Heart right ventricle (tissue), 16 donors: ENCODE measurements at regions of chr3 and their contacts with region 1.

Region 1: DNA sequence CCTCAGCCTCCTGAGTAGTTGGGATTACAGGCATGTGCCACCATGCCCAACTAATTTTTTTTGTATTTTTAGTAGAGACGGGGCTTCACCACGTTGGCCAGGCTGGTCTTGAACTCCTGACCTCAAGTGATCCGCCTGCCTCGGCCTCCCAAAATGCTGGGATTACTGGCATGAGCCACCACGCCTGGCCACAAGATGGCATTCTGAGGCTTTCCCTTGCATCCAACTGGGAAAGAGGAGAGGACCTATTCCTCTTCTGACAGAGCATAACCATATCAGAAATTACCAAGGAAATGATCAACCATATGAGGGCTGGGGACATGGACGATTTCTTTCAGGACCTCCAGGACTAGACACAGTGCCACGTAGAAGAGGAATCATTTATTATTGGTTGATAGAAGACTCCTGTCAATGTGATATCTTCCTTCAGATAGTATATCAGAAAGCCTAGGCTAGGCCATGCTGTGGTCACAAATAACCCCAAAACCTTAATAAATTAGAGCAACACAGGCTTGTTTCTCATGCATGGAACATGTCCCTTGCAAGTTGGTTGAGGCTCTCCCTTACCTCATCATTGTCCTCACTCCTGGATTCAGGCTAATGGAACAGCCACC is 372.3 kb upstream of the IL12A start:
- DNase-seq: peak; percentile 36 to 43
- ATAC-seq: peak in 7 of 8 donors; percentile 52 to 81 (median 73)
- H3K4me3 ChIP-seq: no peak overlapping the region
- H3K27ac ChIP-seq: no peak overlapping the region
- H3K4me1 ChIP-seq: peaks cover 0 to 14% (median 9%) of the 10 kb centered on the region in 9 donors
- H3K27me3 ChIP-seq: no peaks in the 10 kb centered on the region
- CTCF ChIP-seq: peak; percentile 57 to 78 (median 70)

Region 2: DNA sequence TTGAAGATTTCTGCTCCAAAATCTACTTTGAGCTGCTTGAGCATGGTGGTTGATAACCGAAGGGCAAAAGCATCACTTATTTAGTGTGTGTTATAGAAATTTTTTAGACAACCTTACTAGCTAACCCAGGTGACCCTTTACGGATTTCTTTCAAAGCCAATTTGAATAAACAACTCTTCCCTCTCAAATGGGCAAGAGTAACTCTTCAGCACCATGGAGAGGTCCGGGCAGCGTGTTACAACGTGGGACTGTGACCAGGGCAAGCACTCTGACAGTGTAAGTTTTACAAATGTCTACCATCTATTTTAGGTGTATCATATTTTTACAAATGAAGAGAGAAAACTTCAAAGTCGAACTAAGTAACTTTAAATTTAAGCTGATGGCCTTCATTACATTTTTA is 342.7 kb before region 1 on chr3:
- intact Hi-C with region 1: no loop called
- DNase-seq: peak; percentile 18 to 60
- ATAC-seq: peak in 2 of 8 donors; percentile 27 to 72
- H3K4me3 ChIP-seq: no peak overlapping the region
- H3K27ac ChIP-seq: no peak overlapping the region
- H3K4me1 ChIP-seq: no peaks in the 10 kb centered on the region
- H3K27me3 ChIP-seq: no peaks in the 10 kb centered on the region
- CTCF ChIP-seq: no peak

Region 3: DNA sequence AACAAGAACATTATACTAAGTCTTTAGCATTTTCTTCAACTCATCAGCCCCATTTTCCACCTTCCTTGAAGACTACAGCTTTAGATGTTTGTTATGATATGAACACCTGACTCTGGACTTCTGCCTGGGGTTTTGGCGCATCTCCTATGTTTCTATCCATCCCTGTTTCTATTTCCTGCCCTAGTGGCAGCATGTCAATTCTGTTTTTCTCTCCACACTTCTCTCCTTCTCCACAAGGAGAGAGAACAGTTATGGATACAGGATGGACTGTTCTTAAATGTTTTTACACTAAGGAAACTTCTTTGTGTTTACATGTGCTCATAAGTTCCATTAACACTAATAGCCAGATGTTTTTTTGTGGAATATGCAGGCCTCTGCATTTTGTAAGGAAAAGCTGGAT is 51.0 kb before region 1 on chr3:
- intact Hi-C with region 1: no loop called
- DNase-seq: no peak
- ATAC-seq: no peak
- H3K4me3 ChIP-seq: no peak overlapping the region
- H3K27ac ChIP-seq: no peak overlapping the region
- H3K4me1 ChIP-seq: no peaks in the 10 kb centered on the region
- H3K27me3 ChIP-seq: no peaks in the 10 kb centered on the region
- CTCF ChIP-seq: no peak

Region 4: DNA sequence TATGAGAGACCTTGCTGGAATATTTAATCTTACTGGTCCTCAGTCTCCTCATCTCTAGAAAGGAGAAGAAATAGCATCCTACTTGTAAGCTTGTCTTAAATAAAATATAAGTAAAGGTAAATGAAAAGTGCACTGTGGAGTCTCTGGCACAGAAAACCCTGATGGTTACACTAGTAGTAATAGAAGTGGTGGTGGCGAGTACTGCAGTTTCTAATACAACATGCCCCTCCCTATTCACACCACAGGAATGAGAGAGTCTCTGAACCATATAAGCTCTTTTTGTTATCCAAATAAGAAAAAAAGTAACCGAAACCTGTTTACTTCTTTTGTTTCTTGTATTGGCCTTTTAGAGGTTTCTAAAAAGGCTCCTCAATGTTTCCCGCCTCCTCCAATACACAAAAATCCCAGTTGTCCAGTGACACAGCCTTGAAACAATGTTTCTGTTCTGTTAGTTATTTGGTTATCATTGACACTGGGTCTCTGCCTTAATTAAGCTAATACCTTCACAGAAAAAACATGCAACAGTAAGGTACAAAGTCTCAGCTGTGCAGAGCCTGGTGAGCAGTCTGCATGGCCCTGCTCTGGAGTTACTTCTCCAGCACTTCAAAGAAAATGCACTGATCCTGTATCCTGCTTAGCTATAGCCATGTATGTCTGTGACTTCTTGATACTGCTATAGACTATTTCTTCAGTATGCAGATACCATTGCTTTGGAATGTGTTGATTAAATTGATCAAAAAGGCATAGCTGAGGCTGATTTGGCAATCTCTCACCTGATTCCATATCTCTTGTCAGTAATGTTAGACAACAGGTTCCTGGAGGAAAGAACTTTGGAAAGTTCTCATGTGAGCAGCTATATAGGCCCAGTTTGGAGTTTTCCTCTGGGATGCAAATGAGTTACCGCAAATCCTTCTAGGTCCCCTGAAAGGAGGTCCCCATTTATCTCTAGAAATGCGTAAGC is 56.7 kb after region 1 on chr3:
- intact Hi-C with region 1: loop called in 1 of 10 experiments (anchors 5 kb)
- DNase-seq: no peak
- ATAC-seq: no peak
- H3K4me3 ChIP-seq: no peak overlapping the region
- H3K27ac ChIP-seq: no peak overlapping the region
- H3K4me1 ChIP-seq: peaks cover 0 to 21% (median 4%) of the 10 kb centered on the region in 9 donors
- H3K27me3 ChIP-seq: no peaks in the 10 kb centered on the region
- CTCF ChIP-seq: no peak

Region 5: GRCh38 chr3:159732172-159733111 is 116.1 kb after region 1 on chr3:
- intact Hi-C with region 1: loop called in 4 of 10 experiments (anchors 10 kb)
- DNase-seq: no peak
- ATAC-seq: peak; percentile 74 to 92 (median 84)
- H3K4me3 ChIP-seq: peak overlapping the region in 9 of 10 donors; percentile 3 to 48 (median 34)
- H3K27ac ChIP-seq: peak overlapping the region in 9 of 10 donors; percentile 2 to 67 (median 53)
- H3K4me1 ChIP-seq: peaks cover 0 to 20% (median 13%) of the 10 kb centered on the region in 9 donors
- H3K27me3 ChIP-seq: no peaks in the 10 kb centered on the region
- CTCF ChIP-seq: peak in 4 of 9 donors; percentile 11 to 47 (median 36)

Region 6: DNA sequence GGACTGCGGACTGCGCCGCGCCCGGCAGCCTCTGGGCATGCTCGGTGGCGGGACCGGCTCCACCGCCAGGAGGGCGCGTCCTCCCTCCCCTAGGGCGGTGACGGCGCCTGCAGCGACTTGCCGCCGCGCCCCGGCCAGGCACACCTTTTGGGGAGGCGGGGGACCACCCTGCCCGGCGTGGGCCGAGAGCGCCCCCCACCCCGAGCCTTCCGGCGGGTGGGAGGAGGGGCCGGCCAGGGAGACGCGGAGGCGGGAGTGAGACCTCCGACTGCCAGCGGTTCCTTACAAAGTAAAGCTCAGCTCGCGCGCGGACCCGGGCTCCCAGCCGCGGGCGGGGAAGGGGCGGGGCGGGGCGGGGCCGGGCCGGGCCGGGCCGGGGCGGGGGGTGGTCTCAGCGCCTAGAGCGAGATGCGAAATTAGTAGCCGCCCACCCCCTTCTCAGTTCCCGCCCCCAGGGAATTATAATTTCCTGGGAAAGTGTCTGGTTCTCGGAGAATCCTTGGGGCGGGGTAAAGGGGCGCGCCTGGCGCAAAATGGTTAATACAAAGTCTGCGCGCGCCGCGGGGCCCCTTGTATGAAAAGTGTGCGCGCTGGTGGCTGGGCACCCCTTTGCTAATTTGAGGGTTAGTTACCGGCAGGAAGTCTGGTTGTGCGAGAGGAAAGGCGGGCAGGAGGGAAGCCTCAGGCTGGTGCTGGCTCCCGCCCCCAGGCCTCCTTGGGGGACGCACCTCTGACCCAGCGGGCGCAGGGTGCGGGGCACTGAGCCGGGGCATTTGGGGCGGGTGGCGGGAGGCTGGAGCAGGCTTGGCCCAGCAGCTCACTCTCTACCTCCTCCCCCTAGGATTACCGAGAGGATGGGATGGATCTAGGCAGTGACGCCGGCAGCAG is 147.5 kb after region 1 on chr3:
- intact Hi-C with region 1: loop called in 6 of 10 experiments (anchors 1 to 5 kb)
- DNase-seq: peak; percentile 81 to 86
- ATAC-seq: peak; percentile 72 to 88 (median 76)
- H3K4me3 ChIP-seq: peak overlapping the region; percentile 67 to 93 (median 84)
- H3K27ac ChIP-seq: peak overlapping the region; percentile 91 to 99 (median 98)
- H3K4me1 ChIP-seq: peaks cover 7 to 69% (median 44%) of the 10 kb centered on the region in 9 donors
- H3K27me3 ChIP-seq: peaks cover 0 to 42% (median 0%) of the 10 kb centered on the region in 7 donors
- CTCF ChIP-seq: peak in 8 of 9 donors; percentile 20 to 49 (median 39)

Region 7: DNA sequence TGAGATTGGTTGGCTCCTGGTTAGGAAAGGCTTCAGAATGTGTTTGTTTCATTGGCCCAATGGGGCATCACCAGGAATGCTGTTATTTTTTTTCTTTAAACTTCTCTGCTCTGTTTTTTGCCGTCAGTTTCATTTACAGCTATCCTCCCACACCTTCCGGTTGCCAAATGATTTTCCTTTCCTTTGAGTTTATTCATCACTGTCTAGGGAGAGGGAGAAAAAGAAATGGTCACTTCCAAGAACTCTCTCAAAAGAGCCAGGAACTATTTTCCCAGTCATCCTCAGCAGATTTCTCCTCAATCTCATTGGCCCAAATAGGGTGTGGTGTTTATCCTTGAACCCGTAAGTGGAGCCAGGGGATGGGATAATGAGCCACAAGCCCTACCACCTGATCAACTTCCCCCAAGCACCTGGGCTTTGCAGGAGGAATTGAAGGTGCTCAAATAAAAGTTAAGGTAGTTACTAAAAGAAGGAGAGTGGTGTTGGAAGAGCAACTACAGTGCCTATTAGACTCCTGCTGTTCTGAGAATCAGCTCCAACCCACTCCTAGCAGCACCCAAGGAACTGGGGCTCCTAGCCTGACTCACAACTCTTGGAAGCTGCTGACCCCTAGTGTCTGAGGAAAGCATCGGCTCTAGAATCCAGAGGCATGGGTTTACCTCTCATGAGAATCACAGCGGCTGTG is 188.5 kb after region 1 on chr3:
- intact Hi-C with region 1: loop called in 9 of 10 experiments (anchors 1 to 5 kb)
- DNase-seq: peak in 1 of 2 donors; percentile 82
- ATAC-seq: peak; percentile 88 to 94 (median 92)
- H3K4me3 ChIP-seq: peak overlapping the region in 1 of 10 donors; percentile 4
- H3K27ac ChIP-seq: peak overlapping the region in 8 of 10 donors; percentile 42 to 74 (median 64)
- H3K4me1 ChIP-seq: peaks cover 8 to 79% (median 57%) of the 10 kb centered on the region in 9 donors
- H3K27me3 ChIP-seq: no peaks in the 10 kb centered on the region
- CTCF ChIP-seq: peak; percentile 80 to 94 (median 86)

Region 8: DNA sequence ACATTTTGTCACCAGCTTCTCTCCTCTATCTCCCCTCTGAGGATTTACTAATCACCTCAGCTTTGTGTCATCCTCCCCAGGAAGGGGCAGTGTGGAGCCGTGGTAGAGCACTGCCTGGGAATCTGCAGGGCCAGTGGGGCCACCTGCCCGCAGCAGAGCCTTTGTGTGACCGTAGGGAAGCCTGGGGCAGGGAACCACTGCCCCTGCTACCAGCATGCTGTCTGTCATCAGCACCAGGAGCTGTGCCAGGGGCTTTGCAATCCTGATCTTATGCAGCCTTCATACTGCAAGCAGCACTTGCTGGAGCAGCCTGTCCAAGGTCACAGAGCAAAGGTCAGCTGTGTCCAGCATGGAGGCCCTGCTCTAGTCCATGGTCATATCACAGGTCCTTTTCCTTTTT is 202.1 kb after region 1 on chr3:
- intact Hi-C with region 1: loop called in 2 of 10 experiments (anchors 5 kb)
- DNase-seq: peak; percentile 60 to 66
- ATAC-seq: peak; percentile 61 to 88 (median 82)
- H3K4me3 ChIP-seq: no peak overlapping the region
- H3K27ac ChIP-seq: peak overlapping the region in 3 of 10 donors; percentile 17 to 40 (median 33)
- H3K4me1 ChIP-seq: peaks cover 0 to 38% (median 27%) of the 10 kb centered on the region in 9 donors
- H3K27me3 ChIP-seq: no peaks in the 10 kb centered on the region
- CTCF ChIP-seq: peak in 5 of 9 donors; percentile 11 to 54 (median 33)

Region 9: DNA sequence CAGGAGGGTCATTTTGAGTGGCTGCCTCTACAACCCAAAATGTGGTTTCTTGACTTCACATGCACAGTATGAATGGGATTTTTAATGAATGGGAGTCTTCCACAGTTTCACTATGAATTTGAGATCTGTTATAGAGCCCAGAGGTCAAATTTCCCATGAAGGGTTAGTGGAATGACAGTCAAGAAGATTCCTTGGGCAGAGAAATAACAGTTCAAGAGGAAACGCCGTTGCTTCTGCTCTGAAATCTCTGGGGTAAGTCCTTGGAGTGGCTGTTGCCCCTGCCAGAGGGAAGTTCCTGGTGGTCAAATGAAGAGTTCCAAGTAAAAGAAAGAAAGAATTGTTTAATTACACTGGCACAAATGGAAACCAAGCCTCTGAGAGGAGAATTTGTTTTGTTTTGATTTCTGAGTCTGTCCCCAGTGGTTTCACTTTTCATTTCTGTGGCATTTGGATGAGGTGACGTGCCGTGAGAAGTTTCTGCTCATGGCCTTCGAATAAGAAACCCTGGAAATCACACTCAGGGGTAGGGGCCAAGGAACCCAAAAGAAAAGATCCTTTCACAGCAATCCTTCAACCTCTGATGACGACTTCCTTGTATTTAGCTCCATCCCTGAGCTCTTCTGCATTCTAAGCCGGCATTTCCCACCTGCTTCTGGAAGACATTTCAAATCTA is 294.8 kb after region 1 on chr3:
- intact Hi-C with region 1: no loop called
- DNase-seq: no peak
- ATAC-seq: peak in 7 of 8 donors; percentile 33 to 74 (median 49)
- H3K4me3 ChIP-seq: peak overlapping the region in 8 of 10 donors; percentile 13 to 42 (median 40)
- H3K27ac ChIP-seq: peak overlapping the region in 9 of 10 donors; percentile 24 to 79 (median 64)
- H3K4me1 ChIP-seq: peaks cover 0 to 24% (median 11%) of the 10 kb centered on the region in 9 donors
- H3K27me3 ChIP-seq: no peaks in the 10 kb centered on the region
- CTCF ChIP-seq: no peak

Region 10: DNA sequence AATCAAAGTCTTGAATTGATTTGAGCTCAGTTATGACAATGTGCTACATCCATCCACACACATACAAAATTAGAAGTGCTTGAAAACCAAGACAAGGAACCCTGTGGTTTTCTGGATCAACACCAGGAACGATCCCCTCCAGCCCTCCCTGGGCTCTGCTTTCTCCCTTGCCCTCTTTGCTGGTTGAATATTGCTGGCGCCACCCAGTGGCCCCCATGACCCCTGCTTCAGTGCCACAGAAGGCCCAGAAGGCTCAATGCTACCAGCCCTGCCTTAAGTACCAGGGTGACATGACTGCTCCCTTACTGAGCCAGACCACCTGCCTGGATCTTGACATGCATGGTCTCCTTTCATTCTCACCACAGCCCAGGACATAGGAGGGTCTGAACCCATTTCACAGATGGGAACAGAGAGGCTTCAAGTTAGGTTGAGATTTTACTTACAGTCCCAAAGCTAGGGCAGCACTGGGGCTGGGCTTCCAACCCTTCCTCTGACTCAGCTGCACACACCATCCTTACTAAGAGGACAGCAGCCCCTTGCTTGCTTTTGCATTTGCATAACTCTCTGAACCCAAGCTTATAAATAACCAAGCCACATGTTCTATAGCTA is 387.3 kb after region 1 on chr3:
- intact Hi-C with region 1: loop called in 9 of 10 experiments (anchors 5 to 10 kb)
- DNase-seq: peak; percentile 52 to 63
- ATAC-seq: peak; percentile 67 to 92 (median 84)
- H3K4me3 ChIP-seq: no peak overlapping the region
- H3K27ac ChIP-seq: no peak overlapping the region
- H3K4me1 ChIP-seq: peaks cover 0 to 6% (median 0%) of the 10 kb centered on the region in 9 donors
- H3K27me3 ChIP-seq: no peaks in the 10 kb centered on the region
- CTCF ChIP-seq: peak; percentile 44 to 77 (median 68)